K562 (cell line): ENCODE measurements at regions of chr6 and their contacts with region 1.

Region 1: DNA sequence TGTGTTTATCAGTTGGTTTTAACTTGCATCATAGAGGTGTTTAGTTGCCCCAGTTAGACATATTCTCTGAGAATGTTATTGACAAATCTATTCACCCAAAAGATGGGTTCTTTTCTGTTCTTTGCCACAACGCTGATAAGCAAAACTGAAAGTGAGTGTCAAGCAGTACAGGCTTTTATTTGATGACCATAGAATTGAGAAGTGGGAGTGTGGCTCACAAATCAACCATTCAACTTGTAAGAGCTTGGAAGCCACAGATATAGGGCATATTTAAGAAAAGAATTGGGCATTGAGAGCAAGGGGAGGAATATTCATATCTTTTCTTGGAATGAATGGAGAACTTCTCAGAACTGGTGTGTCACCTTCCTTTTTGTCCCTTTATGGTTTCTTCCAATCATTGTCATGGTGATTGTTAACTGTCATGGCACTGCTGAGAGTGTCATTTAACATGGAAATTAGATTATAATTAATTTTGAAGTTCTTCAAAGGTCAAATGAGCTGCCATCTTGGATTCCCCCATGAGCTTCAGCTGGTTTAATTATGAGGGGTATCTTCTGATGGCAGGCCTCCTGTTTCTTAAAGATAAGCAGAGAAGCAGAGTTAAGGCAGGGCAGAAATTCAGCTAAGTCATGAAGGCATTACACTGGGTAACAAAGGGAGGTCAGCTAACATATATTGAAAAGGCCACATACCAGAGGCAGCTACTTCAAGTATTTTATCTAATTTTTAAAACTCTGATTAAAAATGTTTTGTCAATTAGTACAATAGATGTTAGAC is 254.0 kb upstream of the HTR1E start:
- DNase-seq: peak; percentile 77 to 94 (median 81)
- ATAC-seq: peak; percentile 89
- H3K4me3 ChIP-seq: no peak overlapping the region
- H3K27ac ChIP-seq: peak overlapping the region; percentile 95
- H3K4me1 ChIP-seq: peaks cover 11 to 51% of the 10 kb centered on the region in 2 experiments
- H3K27me3 ChIP-seq: no peaks in the 10 kb centered on the region
- CTCF ChIP-seq: no peak
- EP300 ChIP-seq: peak; percentile 96
- POLR2A ChIP-seq: no peak
- RAD21 ChIP-seq: no peak

Region 2: GRCh38 chr6:84774157-84774984 is 1908.9 kb before region 1 on chr6:
- CTCF ChIA-PET with region 1: no interaction called
- POLR2A ChIA-PET with region 1: no interaction called
- in situ Hi-C with region 1: loop called (anchors 25 kb)
- intact Hi-C with region 1: no loop called
- DNase-seq: peak; percentile 46 to 60 (median 52)
- ATAC-seq: peak; percentile 92
- H3K4me3 ChIP-seq: peak overlapping the region; percentile 37
- H3K27ac ChIP-seq: peak overlapping the region; percentile 37; the same call in 1 of the 3 replicates
- H3K4me1 ChIP-seq: peaks cover 2 to 22% of the 10 kb centered on the region in 2 experiments; a peak in 2 of 5 replicates
- H3K27me3 ChIP-seq: peaks cover 0 to 1% of the 10 kb centered on the region in 2 experiments; a peak in 2 of 5 replicates
- CTCF ChIP-seq: peak; percentile 48 to 68 (median 54); a peak in 5 of 6 replicates
- EP300 ChIP-seq: no peak
- POLR2A ChIP-seq: 0 out of 2 replicates have a peak, but pooled peaks have one; percentile 1
- RAD21 ChIP-seq: peak; percentile 20 to 49; a peak in 3 of 4 replicates

Region 3: DNA sequence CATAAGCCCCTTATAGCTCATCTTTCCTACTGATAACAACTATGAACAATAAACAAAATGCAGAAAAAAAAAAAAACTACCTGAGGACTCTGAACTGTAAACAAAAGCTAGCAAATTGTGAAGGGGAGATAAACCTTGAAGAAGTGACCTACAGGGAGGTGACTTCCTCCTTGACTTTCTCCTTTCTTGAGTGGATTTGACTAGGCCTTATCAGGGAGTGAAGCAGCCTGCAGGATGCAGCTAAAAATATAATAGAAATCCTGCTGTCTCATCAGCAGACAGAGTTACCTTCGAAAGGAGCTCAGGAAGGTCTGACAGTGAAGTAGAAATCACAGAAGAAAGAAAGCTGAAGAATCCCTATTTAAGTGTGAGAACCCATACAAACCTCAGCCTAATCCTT is 68.0 kb before region 1 on chr6:
- CTCF ChIA-PET with region 1: no interaction called
- POLR2A ChIA-PET with region 1: no interaction called
- in situ Hi-C with region 1: no loop called
- intact Hi-C with region 1: loop called (anchors 5 kb)
- DNase-seq: peak in 2 of 4 experiments; percentile 59 to 61
- ATAC-seq: peak; percentile 83
- H3K4me3 ChIP-seq: no peak overlapping the region
- H3K27ac ChIP-seq: no peak overlapping the region
- H3K4me1 ChIP-seq: peaks cover 2 to 15% of the 10 kb centered on the region in 2 experiments; a peak in 4 of 5 replicates
- H3K27me3 ChIP-seq: no peaks in the 10 kb centered on the region
- CTCF ChIP-seq: no peak
- EP300 ChIP-seq: peak; percentile 35; the same call in 1 of the 2 replicates
- POLR2A ChIP-seq: no peak
- RAD21 ChIP-seq: no peak

Region 4: DNA sequence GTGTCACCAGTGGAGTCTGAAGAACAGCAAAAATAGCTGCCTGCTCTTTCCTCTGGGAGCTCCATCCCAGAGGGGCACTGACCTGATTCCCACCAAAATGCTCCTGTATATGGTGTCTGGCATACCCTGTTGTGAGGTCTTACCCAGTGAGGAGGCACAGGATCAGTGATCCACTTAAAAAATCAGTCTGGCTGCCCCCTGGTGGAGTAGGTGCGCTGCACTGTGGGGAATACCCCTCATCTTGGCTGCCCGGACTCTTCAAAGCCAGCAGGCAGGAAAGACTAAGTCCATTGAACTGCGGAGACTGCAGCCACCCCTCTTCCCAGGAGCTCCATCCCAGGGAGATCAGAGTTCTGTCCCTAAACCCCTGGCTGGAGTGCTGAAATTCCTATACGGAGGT is 23.1 kb after region 1 on chr6:
- CTCF ChIA-PET with region 1: no interaction called
- POLR2A ChIA-PET with region 1: no interaction called
- in situ Hi-C with region 1: no loop called
- intact Hi-C with region 1: loop called (anchors 1 kb)
- DNase-seq: peak in 3 of 4 experiments; percentile 16 to 55 (median 35)
- ATAC-seq: peak; percentile 98
- H3K4me3 ChIP-seq: no peak overlapping the region
- H3K27ac ChIP-seq: no peak overlapping the region
- H3K4me1 ChIP-seq: no peaks in the 10 kb centered on the region; a peak in 1 of 5 replicates
- H3K27me3 ChIP-seq: no peaks in the 10 kb centered on the region
- CTCF ChIP-seq: peak; percentile 36 to 65 (median 51)
- EP300 ChIP-seq: no peak
- POLR2A ChIP-seq: no peak
- RAD21 ChIP-seq: peak; percentile 26 to 51; a peak in 3 of 4 replicates